ENCODE measurements at regions of chr13 and their contacts with region 1.

Region 1: GRCh38 chr13:78978381-78978998 is 319.5 kb upstream of the OBI1 start:
- H3K4me3 Mint-ChIP-seq: no peak overlapping the region
- H3K27ac Mint-ChIP-seq: no peak overlapping the region
- H3K4me1 Mint-ChIP-seq: no peaks in the 10 kb centered on the region
- H3K27me3 Mint-ChIP-seq: peaks cover 7% of the 10 kb centered on the region

Region 2: GRCh38 chr13:78241278-78241919 is 737.1 kb before region 1 on chr13:
- intact Hi-C with region 1: loop called (anchors 1 kb)
- H3K4me3 Mint-ChIP-seq: no peak overlapping the region
- H3K27ac Mint-ChIP-seq: no peak overlapping the region
- H3K4me1 Mint-ChIP-seq: peaks cover 6% of the 10 kb centered on the region
- H3K27me3 Mint-ChIP-seq: no peaks in the 10 kb centered on the region

Region 3: GRCh38 chr13:78317030-78317429 is 661.5 kb before region 1 on chr13:
- intact Hi-C with region 1: loop called (anchors 2 kb)
- H3K4me3 Mint-ChIP-seq: no peak overlapping the region
- H3K27ac Mint-ChIP-seq: no peak overlapping the region
- H3K4me1 Mint-ChIP-seq: no peaks in the 10 kb centered on the region
- H3K27me3 Mint-ChIP-seq: no peaks in the 10 kb centered on the region

Region 4: GRCh38 chr13:79711631-79712030 is 733.1 kb after region 1 on chr13:
- intact Hi-C with region 1: no loop called
- H3K4me3 Mint-ChIP-seq: no peak overlapping the region
- H3K27ac Mint-ChIP-seq: no peak overlapping the region
- H3K4me1 Mint-ChIP-seq: no peaks in the 10 kb centered on the region
- H3K27me3 Mint-ChIP-seq: no peaks in the 10 kb centered on the region